ENCODE measurements at regions of chr14 and their contacts with region 1.

Region 1: GRCh38 chr14:93132470-93133065 is 16.8 kb upstream of the ITPK1 start:
- DNase-seq: peak; percentile 86

Region 2: DNA sequence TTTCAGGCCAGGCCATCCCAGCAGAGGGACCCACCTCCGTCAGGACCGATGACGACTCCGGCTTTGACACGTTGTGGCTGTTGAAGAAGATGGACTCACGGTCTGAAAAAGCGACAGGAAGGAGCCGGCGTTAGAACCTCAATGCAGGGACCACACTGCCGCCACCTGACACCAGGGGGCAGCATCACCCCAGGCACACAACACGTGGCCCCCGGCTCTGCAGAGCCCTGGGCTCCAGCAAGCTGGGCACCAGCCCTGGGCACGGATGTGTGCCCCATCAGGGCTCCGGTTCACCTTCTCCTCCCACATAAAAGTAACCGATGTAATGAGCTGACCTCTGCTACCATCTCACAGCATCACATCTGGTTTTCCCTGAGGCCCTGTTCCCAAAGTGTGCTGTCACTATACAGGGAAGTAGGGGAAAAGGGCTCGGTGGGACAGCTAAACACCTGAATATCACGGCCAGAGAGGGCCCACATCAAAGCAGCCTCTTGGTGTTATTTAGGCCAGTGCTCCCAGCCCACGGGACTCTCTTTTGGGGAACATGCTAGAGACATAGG is 180.6 kb before region 1 on chr14:
- in situ Hi-C with region 1: loop called (anchors 25 kb)
- DNase-seq: peak; percentile 72